ENCODE measurements at regions of chr2 and their contacts with region 1.

Region 1: GRCh38 chr2:204722207-204722606 is 176.9 kb downstream of the PARD3B start:
- DNase-seq: no peak
- H3K4me3 ChIP-seq: no peak overlapping the region
- H3K27ac ChIP-seq: no peak overlapping the region
- H3K4me1 ChIP-seq: no peaks in the 10 kb centered on the region
- H3K27me3 ChIP-seq: no peaks in the 10 kb centered on the region
- CTCF ChIP-seq: no peak
- POLR2A ChIP-seq: no peak

Region 2: GRCh38 chr2:204510709-204511420 is 211.3 kb before region 1 on chr2:
- intact Hi-C with region 1: no loop called
- DNase-seq: no peak
- H3K4me3 ChIP-seq: no peak overlapping the region
- H3K27ac ChIP-seq: no peak overlapping the region
- H3K4me1 ChIP-seq: no peaks in the 10 kb centered on the region
- H3K27me3 ChIP-seq: no peaks in the 10 kb centered on the region
- CTCF ChIP-seq: no peak
- POLR2A ChIP-seq: no peak

Region 3: DNA sequence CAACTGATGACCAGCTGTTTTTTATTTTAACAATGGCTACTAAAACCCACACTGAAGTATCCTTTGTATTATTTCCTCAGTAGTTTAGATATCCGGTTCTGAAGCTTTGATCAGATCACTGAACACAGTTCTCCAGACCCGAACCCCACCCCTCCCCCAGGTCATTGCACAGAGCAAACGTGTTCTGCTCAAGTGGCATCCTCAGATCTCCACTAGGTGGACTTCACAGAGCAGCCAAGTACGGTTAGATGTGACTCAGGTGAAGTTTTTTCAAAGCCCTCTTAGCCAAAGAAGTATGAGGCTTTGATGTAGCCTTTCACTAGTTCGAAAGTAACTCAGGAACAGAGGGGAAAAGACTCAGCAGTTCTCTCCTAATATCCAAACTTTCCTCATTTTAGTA is 817.4 kb after region 1 on chr2:
- intact Hi-C with region 1: loop called (anchors 10 kb)
- DNase-seq: no peak
- H3K4me3 ChIP-seq: no peak overlapping the region
- H3K27ac ChIP-seq: no peak overlapping the region
- H3K4me1 ChIP-seq: no peaks in the 10 kb centered on the region
- H3K27me3 ChIP-seq: no peaks in the 10 kb centered on the region
- CTCF ChIP-seq: no peak
- POLR2A ChIP-seq: no peak

Measured in breast epithelium (tissue), 4 donors.